ENCODE measurements at regions of chr2 and their contacts with region 1.

Region 1: DNA sequence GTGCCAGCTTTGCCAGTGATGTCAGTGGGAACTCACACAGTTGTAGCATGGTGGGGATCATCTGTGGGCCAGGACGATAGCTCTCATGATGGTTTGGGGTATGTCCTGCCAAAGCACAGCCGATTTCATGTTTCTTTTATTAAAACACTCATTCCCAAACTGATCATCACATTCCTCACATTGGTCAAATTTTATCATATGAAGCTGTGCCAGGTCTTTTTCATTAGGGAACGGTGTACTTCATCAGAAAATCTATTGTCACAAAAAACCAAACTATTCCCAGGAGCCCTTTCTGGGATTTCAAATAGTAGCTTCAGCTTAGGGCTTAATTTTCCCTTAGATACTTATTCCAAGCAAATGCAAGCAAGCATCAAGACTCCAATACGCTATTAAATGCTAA is 42.0 kb downstream of the ITGA4 start:
- DNase-seq: no peak
- H3K4me3 ChIP-seq: no peak overlapping the region
- H3K4me3 Mint-ChIP-seq: no peak overlapping the region
- H3K27ac ChIP-seq: no peak overlapping the region
- H3K27ac Mint-ChIP-seq: peak overlapping the region in 2 of 7 donors; percentile 42 to 44
- H3K4me1 ChIP-seq: no peaks in the 10 kb centered on the region
- H3K4me1 Mint-ChIP-seq: peaks cover 0 to 11% (median 1%) of the 10 kb centered on the region in 4 donors
- H3K27me3 ChIP-seq: no peaks in the 10 kb centered on the region
- H3K27me3 Mint-ChIP-seq: no peaks in the 10 kb centered on the region

Region 2: DNA sequence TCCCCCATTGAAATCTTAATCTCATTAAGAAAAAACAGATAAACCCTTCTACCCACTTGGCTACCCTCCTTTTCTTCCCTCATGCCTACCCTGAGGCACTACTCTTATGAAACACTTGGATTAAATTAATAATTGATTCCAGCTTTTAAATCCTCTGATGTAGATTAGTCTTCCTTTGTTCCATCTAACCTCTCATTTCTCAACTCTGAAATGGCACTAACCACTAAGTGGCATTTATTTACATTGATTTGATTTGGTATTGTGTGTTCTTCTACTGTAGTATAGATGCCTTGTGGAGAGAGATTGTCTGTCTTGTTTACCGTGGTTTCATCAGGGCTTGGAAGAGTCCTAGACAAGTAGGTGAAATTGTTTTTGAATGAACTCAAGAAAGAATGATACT is 15.4 kb before region 1 on chr2:
- CTCF ChIA-PET with region 1: interaction called, 3 read pairs
- POLR2A ChIA-PET with region 1: interaction called, 5 read pairs
- intact Hi-C with region 1: loop called (anchors 2 kb)
- DNase-seq: no peak
- H3K4me3 ChIP-seq: peak overlapping the region in 1 of 2 donors; percentile 1
- H3K4me3 Mint-ChIP-seq: no peak overlapping the region
- H3K27ac ChIP-seq: no peak overlapping the region
- H3K27ac Mint-ChIP-seq: peak overlapping the region in 6 of 7 donors; percentile 1 to 60 (median 37)
- H3K4me1 ChIP-seq: peaks cover 7% of the 10 kb centered on the region
- H3K4me1 Mint-ChIP-seq: peaks cover 8 to 18% (median 13%) of the 10 kb centered on the region in 4 donors
- H3K27me3 ChIP-seq: no peaks in the 10 kb centered on the region
- H3K27me3 Mint-ChIP-seq: no peaks in the 10 kb centered on the region

Region 3: GRCh38 chr2:181517685-181518301 is 18.6 kb after region 1 on chr2:
- CTCF ChIA-PET with region 1: no interaction called
- POLR2A ChIA-PET with region 1: interaction called, 11 read pairs
- intact Hi-C with region 1: no loop called
- DNase-seq: peak in 1 of 5 donors; percentile 26
- H3K4me3 ChIP-seq: no peak overlapping the region
- H3K4me3 Mint-ChIP-seq: peak overlapping the region in 4 of 8 donors; percentile 1 to 52 (median 35)
- H3K27ac ChIP-seq: no peak overlapping the region
- H3K27ac Mint-ChIP-seq: peak overlapping the region; percentile 1 to 78 (median 59)
- H3K4me1 ChIP-seq: peaks cover 52% of the 10 kb centered on the region
- H3K4me1 Mint-ChIP-seq: peaks cover 40 to 56% (median 47%) of the 10 kb centered on the region in 4 donors
- H3K27me3 ChIP-seq: no peaks in the 10 kb centered on the region
- H3K27me3 Mint-ChIP-seq: no peaks in the 10 kb centered on the region

Measured in CD4-positive, alpha-beta memory T cell (primary cell).